ENCODE measurements at regions of chr13 and their contacts with region 1.

Region 1: DNA sequence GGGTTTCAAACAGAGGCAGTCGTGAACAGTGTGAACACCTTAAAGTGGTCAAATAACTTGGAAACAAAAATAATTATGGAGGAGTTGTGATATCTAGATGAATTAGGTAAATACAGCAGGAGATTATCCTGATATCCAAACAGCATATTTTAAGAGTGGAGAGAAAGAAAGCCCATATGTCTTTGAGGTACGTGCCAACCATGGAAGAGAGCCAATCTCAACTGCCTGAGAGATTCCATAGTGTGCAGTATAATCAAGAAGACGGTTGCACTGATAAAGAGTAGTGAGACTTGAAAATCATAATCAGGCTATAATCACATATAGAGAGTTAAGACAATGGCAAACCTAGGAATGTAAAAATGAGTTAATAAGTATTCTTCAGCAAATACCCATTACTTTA is 472.8 kb upstream of the SLITRK5 start:
- DNase-seq: no peak

Region 2: DNA sequence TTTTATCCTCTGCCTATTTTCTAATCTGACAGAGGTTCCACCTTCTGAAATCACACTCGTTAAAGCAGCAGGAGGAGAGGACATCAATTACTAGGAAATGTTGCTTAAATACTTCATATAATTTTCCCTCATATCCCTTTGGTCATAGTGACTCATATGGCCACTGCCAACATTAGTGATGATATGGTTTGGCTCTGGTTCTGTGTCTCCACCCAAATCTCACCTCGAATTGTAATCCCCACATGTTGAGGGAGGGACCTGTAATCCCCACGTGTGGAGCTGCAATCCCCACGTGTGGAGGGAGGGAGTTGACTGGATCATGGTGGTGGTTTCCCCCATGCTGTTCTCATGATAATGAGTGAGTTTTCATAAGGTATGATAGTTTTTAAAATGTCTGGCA is 145.6 kb before region 1 on chr13:
- intact Hi-C with region 1: loop called in 1 of 2 experiments (anchors 5 kb)
- DNase-seq: no peak

Region 3: GRCh38 chr13:87554045-87554444 is 355.7 kb after region 1 on chr13:
- intact Hi-C with region 1: no loop called
- DNase-seq: no peak

Region 4: DNA sequence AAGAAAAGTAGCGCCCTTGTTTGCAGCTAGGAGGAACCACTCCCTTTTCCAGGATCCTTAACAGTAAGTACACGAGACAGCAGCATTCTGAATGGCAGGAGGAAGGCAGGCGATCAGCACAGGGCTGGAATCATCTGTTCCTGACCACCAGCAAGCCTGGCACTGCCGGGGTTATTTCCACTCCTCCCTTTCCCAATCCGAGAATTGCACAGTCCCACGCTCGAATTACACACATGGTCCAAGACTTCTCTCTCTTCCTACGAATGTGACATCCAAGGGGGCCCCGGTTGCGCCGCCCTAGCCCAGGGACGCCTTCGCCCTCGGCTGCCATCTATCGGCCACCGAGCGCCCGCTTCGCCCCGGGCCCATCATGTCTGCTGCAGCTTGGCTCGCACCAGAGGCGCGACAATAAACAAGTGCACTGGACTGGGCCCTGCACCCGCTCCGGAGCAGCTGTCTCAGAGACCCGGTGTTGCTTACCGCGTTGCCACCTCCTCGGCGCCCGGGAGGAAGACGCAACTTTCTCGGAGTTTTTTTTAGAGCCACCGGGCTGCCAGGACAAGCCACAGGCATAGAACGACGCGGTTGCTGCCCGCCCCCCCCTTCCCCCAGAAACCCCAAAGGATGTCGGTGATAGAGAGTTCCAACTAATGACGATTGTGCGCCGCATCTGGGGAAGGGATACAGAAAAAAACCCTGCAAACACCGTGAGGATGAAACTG is 472.8 kb after region 1 on chr13 and contains the start of gene SLITRK5:
- intact Hi-C with region 1: no loop called
- DNase-seq: peak; percentile 89
- total RNA-seq, gene SLITRK5: 0.14 to 0.19 TPM

Measured in posterior vena cava (tissue), 2 donors.